Breast epithelium (tissue), 4 donors: ENCODE measurements at regions of chr10 and their contacts with region 1.

Region 1: GRCh38 chr10:16341637-16342036 is 95.2 kb upstream of the PTER start:
- DNase-seq: no peak
- H3K4me3 ChIP-seq: no peak overlapping the region
- H3K27ac ChIP-seq: no peak overlapping the region
- H3K4me1 ChIP-seq: no peaks in the 10 kb centered on the region
- H3K27me3 ChIP-seq: no peaks in the 10 kb centered on the region
- CTCF ChIP-seq: no peak
- POLR2A ChIP-seq: no peak

Region 2: DNA sequence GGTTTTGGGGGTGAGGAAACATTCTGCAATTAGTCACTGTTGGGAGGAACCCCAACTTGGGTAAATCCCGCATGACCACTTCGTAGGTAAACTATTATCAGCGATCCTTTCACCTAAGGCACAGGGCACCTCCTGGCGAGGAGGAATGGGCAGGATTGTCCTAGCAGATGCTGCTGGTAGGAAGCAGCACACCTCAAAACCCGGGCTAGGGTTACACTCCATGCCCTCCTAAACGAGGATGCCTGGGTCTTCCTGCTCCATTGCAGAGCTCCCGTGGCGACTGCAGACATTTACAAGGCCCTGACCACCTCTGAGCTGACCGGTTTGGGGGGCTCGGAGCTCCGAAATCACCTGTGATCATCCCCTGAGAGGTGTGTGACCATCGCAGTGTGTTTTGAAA is 1062.9 kb before region 1 on chr10:
- intact Hi-C with region 1: loop called (anchors 10 kb)
- DNase-seq: no peak
- H3K4me3 ChIP-seq: no peak overlapping the region
- H3K27ac ChIP-seq: no peak overlapping the region
- H3K4me1 ChIP-seq: no peaks in the 10 kb centered on the region
- H3K27me3 ChIP-seq: no peaks in the 10 kb centered on the region
- CTCF ChIP-seq: no peak
- POLR2A ChIP-seq: no peak

Region 3: GRCh38 chr10:17993361-17993760 is 1651.7 kb after region 1 on chr10:
- intact Hi-C with region 1: no loop called
- DNase-seq: no peak
- H3K4me3 ChIP-seq: no peak overlapping the region
- H3K27ac ChIP-seq: no peak overlapping the region
- H3K4me1 ChIP-seq: no peaks in the 10 kb centered on the region
- H3K27me3 ChIP-seq: no peaks in the 10 kb centered on the region
- CTCF ChIP-seq: no peak
- POLR2A ChIP-seq: no peak